ENCODE measurements at regions of chr5 and their contacts with region 1.

Region 1: GRCh38 chr5:6576861-6577501 is 55.9 kb downstream of the NSUN2 start:
- DNase-seq: no peak
- H3K4me3 ChIP-seq: no peak overlapping the region
- H3K27ac ChIP-seq: no peak overlapping the region
- H3K4me1 ChIP-seq: no peaks in the 10 kb centered on the region
- H3K27me3 ChIP-seq: no peaks in the 10 kb centered on the region
- CTCF ChIP-seq: peak; percentile 9 to 60 (median 39)
- EP300 ChIP-seq: no peak
- POLR2A ChIP-seq: no peak

Region 2: GRCh38 chr5:5738797-5739489 is 838.0 kb before region 1 on chr5:
- intact Hi-C with region 1: no loop called
- DNase-seq: no peak
- H3K4me3 ChIP-seq: no peak overlapping the region
- H3K27ac ChIP-seq: no peak overlapping the region
- H3K4me1 ChIP-seq: no peaks in the 10 kb centered on the region
- H3K27me3 ChIP-seq: no peaks in the 10 kb centered on the region
- CTCF ChIP-seq: no peak
- EP300 ChIP-seq: no peak
- POLR2A ChIP-seq: no peak

Region 3: DNA sequence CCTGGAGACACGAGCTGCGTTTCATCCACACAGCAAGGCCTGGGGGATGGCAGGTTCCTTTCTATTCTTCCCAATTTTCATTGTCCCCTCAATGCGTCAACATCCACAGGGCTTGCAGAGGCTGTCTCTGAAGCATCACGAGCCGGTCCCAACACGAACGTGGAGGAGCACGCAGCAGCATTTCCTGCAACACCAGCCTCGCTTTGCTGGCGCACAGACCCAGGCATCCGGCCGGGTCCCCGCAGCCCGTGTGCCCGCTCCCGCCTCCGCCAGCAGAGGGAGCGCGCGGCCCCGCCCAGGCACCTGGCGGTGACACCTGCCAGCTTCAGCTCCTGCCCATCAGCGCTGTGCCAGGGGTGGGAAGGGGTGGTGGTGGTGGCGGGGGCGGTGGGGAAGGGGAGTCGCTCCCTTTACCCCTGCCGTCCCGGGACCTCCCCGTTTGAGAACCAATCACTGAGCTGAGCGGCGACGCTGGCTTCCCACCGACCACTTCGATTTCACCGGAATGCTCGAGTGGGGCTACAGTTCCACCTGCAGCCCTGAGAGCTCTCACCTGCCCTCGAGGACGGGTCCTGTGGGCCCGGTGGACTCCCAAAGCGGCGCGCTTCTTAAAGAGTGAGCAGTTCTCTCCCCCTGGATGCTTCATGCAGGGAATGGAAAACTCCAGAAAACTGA is 690.0 kb before region 1 on chr5:
- intact Hi-C with region 1: loop called (anchors 10 kb)
- DNase-seq: no peak
- H3K4me3 ChIP-seq: no peak overlapping the region
- H3K27ac ChIP-seq: no peak overlapping the region
- H3K4me1 ChIP-seq: peaks cover 0 to 7% (median 0%) of the 10 kb centered on the region in 4 donors
- H3K27me3 ChIP-seq: peaks cover 0 to 11% (median 4%) of the 10 kb centered on the region in 3 donors
- CTCF ChIP-seq: peak in 2 of 4 experiments; percentile 5 to 51
- EP300 ChIP-seq: no peak
- POLR2A ChIP-seq: no peak

Measured in sigmoid colon (tissue), 7 donors.